Posterior vena cava (tissue), 2 donors: ENCODE measurements at regions of chr17 and their contacts with region 1.

Region 1: GRCh38 chr17:3959295-3959925 is 4.8 kb downstream of the ATP2A3 start:
- DNase-seq: no peak

Region 2: GRCh38 chr17:5419959-5420653 is 1460.7 kb after region 1 on chr17 and contains the start of gene RPAIN:
- intact Hi-C with region 1: loop called in 1 of 2 experiments (anchors 10 kb)
- DNase-seq: peak; percentile 95
- total RNA-seq, gene RPAIN: 18.9 to 19.7 TPM